Activated B cell treated with CpG ODN at 0.5 μM for 24 hours (primary cell): ENCODE measurements at regions of chr17 and their contacts with region 1.

Region 1: DNA sequence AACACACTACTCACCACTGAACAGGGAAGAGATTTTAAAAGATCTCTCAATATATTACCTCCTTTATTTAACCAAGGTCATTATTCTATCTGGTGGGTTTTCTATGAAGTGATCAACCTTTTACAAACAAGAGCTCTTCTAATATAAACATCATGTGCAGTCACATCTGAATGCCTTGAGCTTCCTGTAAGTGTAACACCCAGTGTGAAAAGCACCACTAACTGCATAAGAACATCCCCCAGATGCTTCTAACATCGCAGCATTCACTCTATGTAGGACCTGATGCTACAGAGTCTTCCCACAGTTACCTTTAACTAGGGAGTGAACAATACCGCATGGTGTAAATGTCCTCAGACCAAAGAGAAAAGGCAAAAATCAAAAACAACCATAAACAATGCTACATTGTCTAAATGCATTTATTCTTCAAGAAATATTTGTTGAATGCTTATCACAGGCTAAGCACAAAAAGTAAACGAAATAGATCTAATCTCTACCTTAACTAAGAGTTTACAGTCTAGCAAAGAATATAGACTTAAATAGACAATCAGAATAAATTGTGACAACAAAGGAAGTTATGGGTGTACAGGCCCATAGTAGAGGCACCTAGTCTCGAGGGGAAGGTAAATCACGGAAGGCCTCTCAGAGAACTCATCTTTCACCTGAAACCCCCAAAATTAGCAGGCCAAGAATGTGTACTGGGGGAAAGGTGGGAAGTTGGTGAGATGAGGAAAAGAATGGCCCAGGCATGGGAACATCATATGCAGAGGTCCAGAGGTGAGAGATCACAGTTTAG is 16.2 kb downstream of the SKAP1 start:
- DNase-seq: no peak
- ATAC-seq: peak; percentile 83
- H3K4me3 Mint-ChIP-seq: peak overlapping the region; percentile 57
- H3K27ac Mint-ChIP-seq: peak overlapping the region; percentile 88
- H3K4me1 Mint-ChIP-seq: peaks cover 60% of the 10 kb centered on the region
- H3K27me3 Mint-ChIP-seq: peaks cover 2% of the 10 kb centered on the region
- CTCF ChIP-seq: no peak

Region 2: DNA sequence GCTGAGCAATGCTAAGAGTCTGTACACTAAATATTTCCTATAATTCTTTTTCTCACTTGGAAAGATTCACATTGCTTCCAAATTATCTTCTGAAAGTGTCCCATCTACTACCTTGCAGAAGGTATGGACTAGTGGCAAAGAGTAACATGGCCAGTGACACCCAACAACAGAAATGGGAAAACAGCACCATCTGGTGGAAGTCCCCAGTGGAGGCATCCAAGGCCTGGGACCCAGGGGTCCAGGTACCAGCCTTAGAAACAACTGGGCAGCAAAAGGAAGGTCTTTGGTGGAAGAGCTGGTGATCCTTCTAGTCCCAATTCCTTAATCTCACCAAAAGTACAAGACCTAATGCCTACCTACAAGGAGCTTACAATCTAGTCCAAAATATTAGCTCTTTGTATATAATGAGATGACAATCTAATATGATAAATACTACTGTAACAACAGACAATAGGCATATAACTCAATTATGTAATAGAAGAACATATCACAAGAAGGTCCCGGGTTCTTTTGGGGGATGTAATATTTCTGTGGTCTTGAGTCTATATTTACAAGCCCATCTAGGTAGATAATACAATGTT is 39.1 kb before region 1 on chr17:
- CTCF ChIA-PET with region 1: interaction called, 5 read pairs
- POLR2A ChIA-PET with region 1: interaction called, 3 read pairs
- intact Hi-C with region 1: loop called (anchors 5 kb)
- DNase-seq: no peak
- ATAC-seq: peak; percentile 51
- H3K4me3 Mint-ChIP-seq: no peak overlapping the region
- H3K27ac Mint-ChIP-seq: peak overlapping the region; percentile 80
- H3K4me1 Mint-ChIP-seq: peaks cover 23% of the 10 kb centered on the region
- H3K27me3 Mint-ChIP-seq: no peaks in the 10 kb centered on the region
- CTCF ChIP-seq: no peak

Region 3: GRCh38 chr17:48429638-48430586 is 16.1 kb after region 1 on chr17 and contains the start of gene SKAP1:
- CTCF ChIA-PET with region 1: interaction called, 3 read pairs
- POLR2A ChIA-PET with region 1: interaction called, 4 read pairs
- intact Hi-C with region 1: loop called (anchors 2 kb)
- DNase-seq: peak; percentile 61
- ATAC-seq: peak; percentile 90
- H3K4me3 Mint-ChIP-seq: peak within 1 kb of the TSS; percentile 86
- H3K27ac Mint-ChIP-seq: peak within 1 kb of the TSS; percentile 83
- H3K4me1 Mint-ChIP-seq: peaks cover 67% of the 10 kb centered on the region
- H3K27me3 Mint-ChIP-seq: peaks cover 8% of the 10 kb centered on the region
- CTCF ChIP-seq: no peak
- total RNA-seq, gene SKAP1: 24.3 and 25.3 TPM in 2 replicates

Region 4: DNA sequence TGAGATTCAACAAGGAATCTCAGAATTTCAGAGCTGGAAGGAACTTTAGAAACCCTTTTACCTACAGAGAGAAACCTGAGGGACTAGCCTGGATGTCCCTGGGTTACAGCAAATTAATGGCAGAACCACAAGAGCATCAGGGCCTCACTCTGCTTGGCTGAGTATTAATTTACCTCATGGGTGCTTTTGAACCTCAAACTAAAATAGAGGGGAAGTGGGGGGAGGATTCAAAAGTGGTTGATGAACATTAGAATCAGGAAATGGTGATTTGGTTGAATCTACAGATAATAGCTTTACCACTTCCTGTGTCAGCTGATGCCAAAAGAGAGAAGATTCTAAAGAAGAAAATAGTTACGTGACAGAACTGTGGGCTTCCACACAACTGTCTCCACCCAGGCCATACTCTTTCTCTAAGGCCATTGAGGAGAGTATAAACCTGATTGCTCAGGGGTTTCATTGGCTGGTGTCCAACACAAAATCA is 27.5 kb after region 1 on chr17:
- CTCF ChIA-PET with region 1: no interaction called
- POLR2A ChIA-PET with region 1: interaction called, 10 read pairs
- intact Hi-C with region 1: loop called (anchors 1 kb)
- DNase-seq: no peak
- ATAC-seq: peak; percentile 75
- H3K4me3 Mint-ChIP-seq: peak overlapping the region; percentile 55
- H3K27ac Mint-ChIP-seq: peak overlapping the region; percentile 92
- H3K4me1 Mint-ChIP-seq: peaks cover 88% of the 10 kb centered on the region
- H3K27me3 Mint-ChIP-seq: peaks cover 5% of the 10 kb centered on the region
- CTCF ChIP-seq: no peak